B cell (primary cell): ENCODE measurements at regions of chr9 and their contacts with region 1.

Region 1: DNA sequence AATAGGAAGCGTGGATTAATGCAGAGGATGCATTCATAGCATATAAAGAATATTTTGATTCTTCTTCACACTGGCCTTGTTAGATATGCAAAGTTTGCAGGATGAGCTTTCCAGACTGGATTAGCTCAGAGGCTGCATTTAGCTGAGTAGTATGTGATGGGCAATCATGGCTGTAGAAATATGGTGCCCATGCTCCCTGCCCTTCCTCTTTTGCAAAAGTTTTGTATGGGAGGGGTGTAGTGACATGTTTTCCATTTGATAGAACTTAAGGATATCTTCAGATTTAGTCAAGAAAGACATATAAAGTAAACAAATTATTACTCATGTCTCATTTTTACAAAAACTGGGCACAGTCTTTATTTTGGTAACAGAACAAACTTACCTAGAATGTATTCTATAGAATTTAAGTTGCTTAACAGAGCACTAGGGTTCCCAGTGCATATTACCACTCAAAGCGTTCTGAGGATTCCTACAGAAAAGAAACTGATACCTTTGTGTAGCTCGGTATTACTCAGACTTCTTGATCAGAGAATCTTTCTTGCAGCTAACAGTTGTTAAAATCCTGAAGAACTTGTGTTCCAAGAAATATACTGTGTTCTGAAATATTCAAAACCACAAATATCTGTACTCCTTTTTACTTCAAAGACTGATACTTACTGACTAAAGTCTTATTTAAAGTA is 9.8 kb downstream of the GTF3C4 start:
- DNase-seq: no peak
- ATAC-seq: no peak
- H3K4me3 ChIP-seq: no peak overlapping the region
- H3K4me3 Mint-ChIP-seq: no peak overlapping the region
- H3K27ac ChIP-seq: no peak overlapping the region
- H3K27ac Mint-ChIP-seq: no peak overlapping the region
- H3K4me1 ChIP-seq: no peaks in the 10 kb centered on the region
- H3K4me1 Mint-ChIP-seq: peaks cover 10% of the 10 kb centered on the region
- H3K27me3 ChIP-seq: no peaks in the 10 kb centered on the region
- H3K27me3 Mint-ChIP-seq: no peaks in the 10 kb centered on the region
- CTCF ChIP-seq: no peak

Region 2: DNA sequence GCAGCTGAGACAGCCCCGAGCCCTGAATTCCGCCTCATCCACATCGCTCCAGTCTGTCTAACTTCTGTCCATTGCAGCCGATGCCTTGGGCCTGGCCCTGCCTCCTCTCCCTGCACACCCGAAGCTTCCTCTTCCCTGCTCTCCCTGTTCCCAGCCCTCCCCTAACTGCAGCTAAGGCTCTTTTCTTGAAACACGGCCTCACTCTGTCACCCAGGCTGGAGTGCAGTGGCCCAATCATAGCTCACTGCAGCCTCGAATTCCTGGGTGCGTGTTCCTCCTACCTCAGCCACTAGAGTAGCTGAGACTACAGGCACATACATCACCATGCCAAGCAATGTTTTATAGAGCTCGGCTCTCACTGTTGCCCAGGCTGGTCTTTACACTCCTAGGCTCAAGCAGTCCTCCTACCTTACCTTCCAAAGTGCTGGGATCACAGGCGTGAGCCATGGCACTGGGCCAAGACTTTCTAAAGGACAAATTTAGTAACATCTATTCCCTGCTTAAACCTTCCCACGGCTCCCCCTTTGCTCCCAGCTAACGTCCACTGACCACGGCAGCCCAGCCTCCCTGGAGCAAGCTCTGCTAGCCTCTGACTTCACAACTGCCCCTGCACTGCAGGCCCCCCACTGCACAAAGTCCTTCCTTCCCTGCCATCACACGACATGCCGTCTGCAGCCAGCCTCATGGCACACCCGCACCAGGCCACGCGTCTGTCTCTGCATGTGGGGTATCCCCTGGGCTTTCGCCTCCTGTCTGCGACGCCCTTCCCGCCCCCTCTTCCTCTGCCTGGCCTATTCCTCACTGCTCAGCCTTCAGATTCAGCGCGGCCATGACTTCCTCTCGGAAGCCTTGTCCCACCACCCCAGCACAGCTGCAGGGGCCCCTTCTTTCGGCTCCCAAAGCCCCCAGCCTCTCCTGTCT is 1642.5 kb before region 1 on chr9:
- CTCF ChIA-PET with region 1: no interaction called
- POLR2A ChIA-PET with region 1: interaction called, 13 read pairs
- intact Hi-C with region 1: no loop called
- DNase-seq: no peak
- ATAC-seq: no peak
- H3K4me3 ChIP-seq: no peak overlapping the region
- H3K4me3 Mint-ChIP-seq: no peak overlapping the region
- H3K27ac ChIP-seq: no peak overlapping the region
- H3K27ac Mint-ChIP-seq: no peak overlapping the region
- H3K4me1 ChIP-seq: peaks cover 4 to 5% of the 10 kb centered on the region in 2 donors
- H3K4me1 Mint-ChIP-seq: no peaks in the 10 kb centered on the region
- H3K27me3 ChIP-seq: no peaks in the 10 kb centered on the region
- H3K27me3 Mint-ChIP-seq: peaks cover 14% of the 10 kb centered on the region
- CTCF ChIP-seq: no peak

Region 3: DNA sequence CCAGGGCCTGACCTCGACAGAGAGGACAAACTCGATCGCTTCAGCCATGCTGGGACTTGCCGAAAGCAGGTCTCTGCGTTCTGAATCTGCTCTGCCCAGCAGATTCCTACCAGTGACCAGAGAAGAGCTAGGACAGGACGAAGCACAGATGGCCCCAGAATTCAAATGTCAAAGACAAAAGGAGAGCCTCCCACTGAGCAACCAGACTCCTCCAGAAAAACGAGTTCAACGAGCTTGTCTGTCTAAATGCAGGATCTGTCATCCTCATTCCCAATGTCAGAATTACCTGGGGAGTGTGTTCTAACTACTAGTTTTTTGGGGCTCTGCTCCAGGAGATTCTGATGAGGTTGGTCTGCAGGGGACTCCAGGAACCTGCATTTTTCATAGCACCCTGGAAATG is 184.6 kb after region 1 on chr9:
- CTCF ChIA-PET with region 1: no interaction called
- POLR2A ChIA-PET with region 1: no interaction called
- intact Hi-C with region 1: no loop called
- DNase-seq: no peak
- ATAC-seq: no peak
- H3K4me3 ChIP-seq: no peak overlapping the region
- H3K4me3 Mint-ChIP-seq: no peak overlapping the region
- H3K27ac ChIP-seq: no peak overlapping the region
- H3K27ac Mint-ChIP-seq: no peak overlapping the region
- H3K4me1 ChIP-seq: no peaks in the 10 kb centered on the region
- H3K4me1 Mint-ChIP-seq: no peaks in the 10 kb centered on the region
- H3K27me3 ChIP-seq: no peaks in the 10 kb centered on the region
- H3K27me3 Mint-ChIP-seq: no peaks in the 10 kb centered on the region
- CTCF ChIP-seq: no peak